ENCODE measurements at regions of chr1 and their contacts with region 1.

Region 1: GRCh38 chr1:155277070-155277895 is at the start of gene HCN3:
- DNase-seq: peak; percentile 68 to 95 (median 70)
- ATAC-seq: peak; percentile 71
- H3K4me3 ChIP-seq: peak within 1 kb of the TSS; percentile 59
- H3K4me3 Mint-ChIP-seq: peak within 1 kb of the TSS; percentile 75 to 90 (median 86)
- H3K27ac ChIP-seq: peak within 1 kb of the TSS; percentile 36
- H3K27ac Mint-ChIP-seq: peak within 1 kb of the TSS in 8 of 9 donors; percentile 44 to 83 (median 69)
- H3K4me1 ChIP-seq: peaks cover 18 to 19% of the 10 kb centered on the region in 2 donors
- H3K4me1 Mint-ChIP-seq: peaks cover 24 to 47% (median 38%) of the 10 kb centered on the region in 7 donors
- H3K27me3 ChIP-seq: no peaks in the 10 kb centered on the region
- H3K27me3 Mint-ChIP-seq: peaks cover 0 to 11% (median 0%) of the 10 kb centered on the region in 5 donors
- total RNA-seq, gene HCN3: 1.6 to 3.3 (median 2.8) TPM

Region 2: GRCh38 chr1:155244368-155245162 is 32.7 kb before region 1 on chr1:
- CTCF ChIA-PET with region 1: no interaction called
- POLR2A ChIA-PET with region 1: interaction called, 4 read pairs
- intact Hi-C with region 1: loop called (anchors 1 to 2 kb)
- DNase-seq: peak; percentile 76 to 96 (median 94)
- ATAC-seq: peak; percentile 92
- H3K4me3 ChIP-seq: peak overlapping the region; percentile 63
- H3K4me3 Mint-ChIP-seq: peak overlapping the region; percentile 84 to 97 (median 91)
- H3K27ac ChIP-seq: peak overlapping the region; percentile 73
- H3K27ac Mint-ChIP-seq: peak overlapping the region; percentile 94 to 100 (median 98)
- H3K4me1 ChIP-seq: peaks cover 19 to 20% of the 10 kb centered on the region in 2 donors
- H3K4me1 Mint-ChIP-seq: peaks cover 31 to 50% (median 44%) of the 10 kb centered on the region in 7 donors
- H3K27me3 ChIP-seq: no peaks in the 10 kb centered on the region
- H3K27me3 Mint-ChIP-seq: peaks cover 0 to 6% (median 3%) of the 10 kb centered on the region in 5 donors

Region 3: GRCh38 chr1:155261852-155262673 is 15.2 kb before region 1 on chr1 and contains the start of gene SCAMP3:
- CTCF ChIA-PET with region 1: interaction called, 4 read pairs
- POLR2A ChIA-PET with region 1: interaction called, 40 read pairs
- intact Hi-C with region 1: loop called (anchors 1 kb)
- DNase-seq: peak; percentile 52 to 89 (median 79)
- ATAC-seq: peak; percentile 99
- H3K4me3 ChIP-seq: peak within 1 kb of the TSS; percentile 88
- H3K4me3 Mint-ChIP-seq: peak within 1 kb of the TSS; percentile 81 to 100 (median 98)
- H3K27ac ChIP-seq: peak within 1 kb of the TSS; percentile 87
- H3K27ac Mint-ChIP-seq: peak within 1 kb of the TSS; percentile 89 to 98 (median 96)
- H3K4me1 ChIP-seq: peaks cover 18 to 19% of the 10 kb centered on the region in 2 donors
- H3K4me1 Mint-ChIP-seq: peaks cover 22 to 42% (median 33%) of the 10 kb centered on the region in 7 donors
- H3K27me3 ChIP-seq: no peaks in the 10 kb centered on the region
- H3K27me3 Mint-ChIP-seq: no peaks in the 10 kb centered on the region
- total RNA-seq, gene SCAMP3: 50.8 to 118 (median 100) TPM

Region 4: GRCh38 chr1:155591770-155592169 is 314.5 kb after region 1 on chr1:
- CTCF ChIA-PET with region 1: no interaction called
- POLR2A ChIA-PET with region 1: no interaction called
- intact Hi-C with region 1: loop called in 1 of 2 experiments (anchors 1 kb)
- DNase-seq: peak in 7 of 9 donors; percentile 42 to 71 (median 57)
- ATAC-seq: peak; percentile 85
- H3K4me3 ChIP-seq: no peak overlapping the region
- H3K4me3 Mint-ChIP-seq: no peak overlapping the region
- H3K27ac ChIP-seq: no peak overlapping the region
- H3K27ac Mint-ChIP-seq: peak overlapping the region in 1 of 9 donors; percentile 62
- H3K4me1 ChIP-seq: no peaks in the 10 kb centered on the region
- H3K4me1 Mint-ChIP-seq: peaks cover 0 to 4% (median 3%) of the 10 kb centered on the region in 7 donors
- H3K27me3 ChIP-seq: no peaks in the 10 kb centered on the region
- H3K27me3 Mint-ChIP-seq: no peaks in the 10 kb centered on the region

Region 5: GRCh38 chr1:155847823-155848529 is 570.7 kb after region 1 on chr1:
- CTCF ChIA-PET with region 1: no interaction called
- POLR2A ChIA-PET with region 1: no interaction called
- intact Hi-C with region 1: no loop called
- DNase-seq: no peak
- ATAC-seq: no peak
- H3K4me3 ChIP-seq: no peak overlapping the region
- H3K4me3 Mint-ChIP-seq: peak overlapping the region; percentile 6 to 66 (median 41)
- H3K27ac ChIP-seq: no peak overlapping the region
- H3K27ac Mint-ChIP-seq: peak overlapping the region in 8 of 9 donors; percentile 0 to 85 (median 48)
- H3K4me1 ChIP-seq: peaks cover 14 to 18% of the 10 kb centered on the region in 2 donors
- H3K4me1 Mint-ChIP-seq: peaks cover 44 to 79% (median 61%) of the 10 kb centered on the region in 7 donors
- H3K27me3 ChIP-seq: no peaks in the 10 kb centered on the region
- H3K27me3 Mint-ChIP-seq: no peaks in the 10 kb centered on the region